ENCODE measurements at regions of chr13 and their contacts with region 1.

Region 1: DNA sequence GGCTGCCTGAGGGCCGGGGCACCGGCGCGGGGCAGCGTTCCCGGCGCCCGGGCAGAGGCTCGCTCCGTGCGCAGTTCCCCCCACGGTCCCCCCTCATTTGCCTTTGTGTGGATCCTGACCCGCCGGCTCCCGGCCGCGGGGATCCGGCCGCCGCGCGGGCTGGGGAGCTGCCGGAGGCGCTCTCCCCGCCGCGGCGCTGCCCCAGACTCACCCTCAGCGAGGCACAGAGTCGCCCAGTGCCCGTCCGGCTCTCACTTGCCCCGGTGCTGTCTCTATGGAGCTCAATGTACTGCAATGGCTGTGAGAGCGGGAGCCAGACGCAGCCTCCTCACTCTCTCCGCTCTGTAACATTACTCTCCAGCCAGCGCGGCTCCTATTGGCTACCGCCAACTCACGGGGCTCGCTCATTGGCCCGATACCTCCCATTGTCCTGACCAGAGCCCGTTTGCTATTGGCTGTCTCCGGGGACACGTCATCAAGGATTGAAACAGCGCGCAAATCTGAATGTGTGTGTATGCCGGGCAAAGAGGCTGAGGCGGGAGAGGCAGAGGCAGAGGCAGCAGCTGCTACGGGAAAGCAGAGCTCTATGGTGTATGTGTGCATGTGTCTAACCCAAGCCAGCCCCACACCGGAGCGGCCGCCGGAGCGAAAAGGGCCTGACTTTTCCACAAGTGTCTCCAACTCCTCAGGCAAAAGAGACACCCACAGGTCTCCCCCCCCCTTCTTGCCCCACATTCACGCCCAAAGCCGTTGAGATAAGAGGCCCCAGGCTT is at the start of gene HMGB1:
- DNase-seq: peak; percentile 98
- H3K4me3 ChIP-seq: peak within 1 kb of the TSS; percentile 80 to 100 (median 96)
- H3K27ac ChIP-seq: peak within 1 kb of the TSS; percentile 99 to 100 (median 100)
- H3K4me1 ChIP-seq: peaks cover 4 to 32% (median 23%) of the 10 kb centered on the region in 4 donors
- H3K27me3 ChIP-seq: no peaks in the 10 kb centered on the region
- CTCF ChIP-seq: no peak
- EP300 ChIP-seq: no peak
- POLR2A ChIP-seq: peak; percentile 99
- total RNA-seq, gene HMGB1: 131 to 274 (median 152) TPM

Region 2: GRCh38 chr13:30125422-30126073 is 340.2 kb before region 1 on chr13:
- in situ Hi-C with region 1: loop called in 3 of 4 experiments (anchors 25 kb)
- intact Hi-C with region 1: loop called (anchors 10 kb)
- DNase-seq: no peak
- H3K4me3 ChIP-seq: no peak overlapping the region
- H3K27ac ChIP-seq: peak overlapping the region in 3 of 4 donors; percentile 59 to 78 (median 72)
- H3K4me1 ChIP-seq: peaks cover 0 to 17% (median 9%) of the 10 kb centered on the region in 4 donors
- H3K27me3 ChIP-seq: no peaks in the 10 kb centered on the region
- CTCF ChIP-seq: no peak
- EP300 ChIP-seq: peak; percentile 61
- POLR2A ChIP-seq: no peak

Region 3: GRCh38 chr13:30408319-30409101 is 57.3 kb before region 1 on chr13:
- in situ Hi-C with region 1: loop called in 1 of 4 experiments (anchors 10 kb)
- intact Hi-C with region 1: loop called (anchors 5 kb)
- DNase-seq: peak; percentile 97
- H3K4me3 ChIP-seq: peak overlapping the region in 3 of 4 donors; percentile 5 to 38 (median 20)
- H3K27ac ChIP-seq: peak overlapping the region; percentile 80 to 88 (median 84)
- H3K4me1 ChIP-seq: peaks cover 4 to 19% (median 12%) of the 10 kb centered on the region in 4 donors
- H3K27me3 ChIP-seq: no peaks in the 10 kb centered on the region
- CTCF ChIP-seq: peak; percentile 79 to 94 (median 89)
- EP300 ChIP-seq: no peak
- POLR2A ChIP-seq: no peak

Region 4: DNA sequence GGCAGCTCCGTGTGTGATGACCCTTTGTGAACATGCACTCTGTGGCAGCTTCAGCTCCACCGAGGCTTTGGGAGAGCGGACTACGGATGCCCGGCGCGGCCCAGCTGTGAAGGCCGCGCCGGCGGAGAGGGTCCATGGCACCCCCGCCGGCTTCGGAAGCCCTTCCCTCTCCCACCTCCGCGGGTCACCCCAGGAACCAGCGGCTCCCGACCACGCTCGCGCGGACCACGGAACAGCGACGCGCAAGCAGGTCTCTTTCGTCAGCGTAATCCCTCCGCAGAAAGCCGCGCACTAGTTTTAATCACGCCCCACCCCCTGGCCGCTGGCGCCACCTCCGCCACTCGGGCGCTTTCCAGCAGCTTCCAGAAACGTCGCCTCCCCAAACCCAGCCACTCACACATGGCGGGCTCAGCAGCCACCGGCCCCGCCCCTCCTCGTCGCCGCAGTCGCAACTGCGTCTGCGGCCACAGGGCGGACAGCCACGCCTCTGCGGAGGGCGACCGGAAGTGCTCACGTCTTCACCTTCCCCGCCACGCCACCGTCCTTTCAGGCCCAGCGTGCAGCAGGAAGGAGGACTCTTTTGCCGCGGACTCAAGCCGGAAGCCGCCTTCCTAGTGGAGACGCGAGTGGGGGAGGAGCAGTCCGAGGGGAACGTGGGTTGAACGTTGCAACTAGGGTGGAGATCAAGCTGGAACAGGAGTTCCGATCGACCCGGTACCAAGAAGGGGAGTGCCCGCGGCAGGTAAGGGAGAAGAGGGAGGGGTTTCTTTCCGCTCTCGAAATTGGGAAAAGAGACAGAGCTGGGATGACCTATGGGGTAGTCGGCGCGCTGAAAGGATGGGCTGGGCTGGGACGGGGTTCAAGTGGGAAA is 151.8 kb after region 1 on chr13 and contains the start of gene USPL1:
- in situ Hi-C with region 1: loop called in 1 of 4 experiments (anchors 5 kb)
- intact Hi-C with region 1: loop called (anchors 2 kb)
- DNase-seq: peak; percentile 99
- H3K4me3 ChIP-seq: peak within 1 kb of the TSS; percentile 82 to 93 (median 92)
- H3K27ac ChIP-seq: peak within 1 kb of the TSS; percentile 98 to 100 (median 100)
- H3K4me1 ChIP-seq: peaks cover 21 to 36% (median 29%) of the 10 kb centered on the region in 4 donors
- H3K27me3 ChIP-seq: no peaks in the 10 kb centered on the region
- CTCF ChIP-seq: peak in 4 of 5 experiments; percentile 29 to 93 (median 58)
- EP300 ChIP-seq: peak; percentile 56
- POLR2A ChIP-seq: peak; percentile 99
- total RNA-seq, gene USPL1: 8.6 to 27.3 (median 16.9) TPM

Region 5: DNA sequence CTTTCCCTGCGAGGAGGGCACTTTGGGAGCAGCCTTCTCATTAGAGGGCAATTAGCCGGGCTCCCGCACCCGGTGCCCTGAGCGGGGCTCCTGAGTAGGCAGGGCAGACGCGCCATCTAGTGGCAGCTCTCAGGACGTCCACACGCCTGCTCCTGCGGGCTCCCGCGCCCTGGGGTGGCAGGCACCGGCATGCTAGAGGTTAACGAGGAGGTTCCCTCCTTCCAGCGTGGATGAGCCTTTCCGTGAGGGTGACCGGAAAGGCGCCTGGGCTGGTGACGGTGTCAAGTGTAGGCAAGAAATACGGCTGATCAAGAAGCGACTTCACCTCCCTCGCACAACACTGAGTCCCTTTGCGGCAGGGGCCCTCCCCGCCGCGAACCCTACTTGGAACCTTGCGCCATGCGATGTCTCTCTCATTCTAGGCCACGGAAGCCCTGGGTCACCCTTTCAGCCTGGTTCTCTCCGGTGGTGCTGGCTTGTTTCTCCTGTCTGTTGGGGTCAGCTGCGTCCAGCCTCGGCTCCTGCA is 337.2 kb after region 1 on chr13:
- in situ Hi-C with region 1: no loop called
- intact Hi-C with region 1: loop called (anchors 1 kb)
- DNase-seq: peak; percentile 88
- H3K4me3 ChIP-seq: peak overlapping the region in 3 of 4 donors; percentile 26 to 43 (median 31)
- H3K27ac ChIP-seq: peak overlapping the region in 3 of 4 donors; percentile 29 to 68 (median 49)
- H3K4me1 ChIP-seq: peaks cover 0 to 20% (median 13%) of the 10 kb centered on the region in 4 donors
- H3K27me3 ChIP-seq: no peaks in the 10 kb centered on the region
- CTCF ChIP-seq: peak; percentile 90 to 97 (median 93)
- EP300 ChIP-seq: no peak
- POLR2A ChIP-seq: no peak

Measured in transverse colon (tissue), 4 donors.